ENCODE measurements at regions of chr6 and their contacts with region 1.

Region 1: DNA sequence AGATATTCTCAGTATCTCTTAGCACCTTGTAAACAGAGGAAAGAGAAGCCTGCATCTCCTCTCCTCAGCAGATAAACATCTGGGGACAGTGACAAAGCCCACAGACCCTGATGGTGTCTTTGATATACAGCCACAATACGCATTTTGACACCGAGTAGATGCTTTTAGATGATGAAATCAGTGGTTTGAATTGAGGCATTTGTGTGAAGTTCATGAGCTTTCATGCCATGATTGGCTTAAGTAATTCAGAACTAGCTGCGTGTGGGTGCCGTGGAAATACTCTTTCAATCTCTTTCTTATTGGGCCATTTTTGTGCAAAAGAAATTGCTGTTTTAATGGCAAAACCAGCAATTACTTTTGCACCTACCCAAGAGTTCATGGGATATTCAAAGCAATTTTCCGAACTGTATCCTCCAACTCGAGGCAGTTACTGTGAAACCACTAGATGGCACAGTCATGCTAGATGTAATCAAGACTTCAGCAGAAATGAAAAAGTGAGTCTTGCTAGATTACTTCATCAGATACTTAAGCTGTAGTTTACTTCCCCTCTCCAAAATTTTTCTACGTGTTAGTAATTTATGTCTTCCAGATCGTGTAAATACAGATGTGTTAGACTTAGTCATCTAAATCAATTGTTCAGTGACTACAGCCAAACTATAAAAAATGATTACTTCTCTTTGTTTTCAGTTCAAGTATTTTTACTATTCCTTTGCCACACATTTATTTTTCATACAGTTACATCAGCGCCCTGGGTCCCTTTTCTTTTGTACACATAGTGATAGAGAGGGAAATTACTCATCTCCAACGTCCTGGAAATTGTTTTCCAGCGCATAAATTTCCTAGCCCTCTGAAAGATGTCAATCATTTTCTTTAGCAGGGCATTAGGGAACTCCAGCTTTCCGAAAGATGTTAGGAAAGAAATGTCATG is 49.4 kb downstream of the IYD start:
- DNase-seq: peak; percentile 86
- ATAC-seq: peak; percentile 89
- H3K4me3 ChIP-seq: peak overlapping the region; percentile 59
- H3K27ac ChIP-seq: peak overlapping the region; percentile 78
- H3K4me1 ChIP-seq: peaks cover 11% of the 10 kb centered on the region
- H3K27me3 ChIP-seq: no peaks in the 10 kb centered on the region
- CTCF ChIP-seq: peak; percentile 80

Region 2: DNA sequence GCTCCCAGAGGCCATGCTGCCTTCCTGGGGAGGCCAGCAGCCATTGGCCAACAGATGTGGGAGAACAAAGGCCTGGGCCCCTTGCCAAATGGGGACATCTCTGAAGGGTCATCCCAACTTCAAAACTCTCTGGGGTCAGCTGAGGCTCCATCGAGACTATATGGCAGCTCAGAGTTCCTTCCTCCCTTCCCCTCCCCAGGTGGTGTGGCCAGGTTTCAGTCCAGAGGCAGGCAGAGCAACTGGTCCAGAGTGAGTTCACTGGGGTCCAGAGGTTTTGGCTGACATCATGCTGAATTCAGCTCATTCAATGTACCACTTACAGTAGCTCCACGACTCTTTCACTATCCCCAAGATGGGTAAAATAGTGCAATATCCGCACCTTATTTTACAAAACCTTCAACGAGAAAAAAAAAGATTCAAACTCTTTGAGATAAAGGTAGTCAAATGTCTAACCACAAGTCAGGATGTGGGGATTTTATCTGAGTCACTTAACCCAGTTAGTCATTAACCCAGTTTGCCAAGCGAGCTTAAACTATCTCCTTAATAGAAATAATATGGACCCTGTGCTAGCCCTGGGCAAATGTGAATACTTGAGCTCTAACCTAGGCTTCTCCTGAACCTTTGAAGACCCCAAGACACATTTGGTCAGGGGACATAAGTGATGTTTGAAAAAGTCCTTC is 73.1 kb after region 1 on chr6:
- CTCF ChIA-PET with region 1: no interaction called
- POLR2A ChIA-PET with region 1: no interaction called
- intact Hi-C with region 1: loop called (anchors 5 kb)
- DNase-seq: peak; percentile 87
- ATAC-seq: peak; percentile 66
- H3K4me3 ChIP-seq: peak overlapping the region; percentile 54
- H3K27ac ChIP-seq: peak overlapping the region; percentile 100
- H3K4me1 ChIP-seq: peaks cover 39% of the 10 kb centered on the region
- H3K27me3 ChIP-seq: no peaks in the 10 kb centered on the region
- CTCF ChIP-seq: no peak

Region 3: DNA sequence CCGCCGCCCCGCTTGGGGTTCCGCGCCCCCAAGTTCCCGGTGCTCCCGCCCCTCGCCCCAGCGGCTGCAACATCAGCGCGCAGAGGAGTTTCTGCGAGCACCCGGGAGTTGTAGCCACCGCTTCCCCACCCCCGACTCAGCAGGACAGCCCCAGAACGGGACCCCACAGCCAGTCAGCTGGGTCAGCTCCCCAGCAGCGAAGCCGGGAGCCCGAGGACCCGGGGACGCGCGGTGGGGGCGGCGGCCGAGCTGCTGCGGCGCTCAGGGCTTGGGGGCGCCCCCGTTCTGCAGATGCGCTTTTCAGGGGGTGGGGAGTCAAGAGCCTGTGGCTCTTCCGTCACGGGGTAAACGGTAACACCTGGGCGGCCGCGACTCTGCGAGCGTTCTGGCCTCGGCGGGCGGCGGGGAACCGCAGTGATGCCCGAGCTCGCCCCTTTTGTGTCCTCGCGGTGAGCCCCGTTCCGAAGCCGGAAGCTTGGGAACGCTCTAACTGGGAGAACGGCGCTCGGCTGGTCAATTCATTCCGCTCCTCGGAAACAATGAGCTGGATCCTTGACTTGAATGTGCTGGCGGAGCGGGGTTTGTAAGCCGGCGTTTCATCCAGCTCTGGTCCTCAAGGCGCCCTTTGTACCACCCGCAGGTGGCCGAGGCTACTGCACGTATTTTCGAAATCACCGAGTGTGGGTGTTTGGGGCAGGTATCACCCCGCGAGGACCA is 182.3 kb after region 1 on chr6:
- CTCF ChIA-PET with region 1: interaction called, 3 read pairs
- POLR2A ChIA-PET with region 1: no interaction called
- intact Hi-C with region 1: loop called (anchors 1 kb)
- DNase-seq: peak; percentile 75
- ATAC-seq: peak; percentile 83
- H3K4me3 ChIP-seq: peak overlapping the region; percentile 86
- H3K27ac ChIP-seq: no peak overlapping the region
- H3K4me1 ChIP-seq: peaks cover 6% of the 10 kb centered on the region
- H3K27me3 ChIP-seq: no peaks in the 10 kb centered on the region
- CTCF ChIP-seq: peak; percentile 55

Region 4: GRCh38 chr6:150881911-150882481 is 463.8 kb after region 1 on chr6:
- CTCF ChIA-PET with region 1: no interaction called
- POLR2A ChIA-PET with region 1: no interaction called
- intact Hi-C with region 1: loop called (anchors 1 kb)
- DNase-seq: peak; percentile 88
- ATAC-seq: peak; percentile 95
- H3K4me3 ChIP-seq: peak overlapping the region; percentile 23; the same call in 1 of the 2 replicates
- H3K27ac ChIP-seq: peak overlapping the region; percentile 98
- H3K4me1 ChIP-seq: peaks cover 27% of the 10 kb centered on the region
- H3K27me3 ChIP-seq: no peaks in the 10 kb centered on the region
- CTCF ChIP-seq: no peak

Region 5: GRCh38 chr6:151330134-151330696 is 912.1 kb after region 1 on chr6:
- CTCF ChIA-PET with region 1: no interaction called
- POLR2A ChIA-PET with region 1: no interaction called
- intact Hi-C with region 1: loop called (anchors 10 kb)
- DNase-seq: no peak
- ATAC-seq: no peak
- H3K4me3 ChIP-seq: no peak overlapping the region
- H3K27ac ChIP-seq: no peak overlapping the region
- H3K4me1 ChIP-seq: peaks cover 10% of the 10 kb centered on the region
- H3K27me3 ChIP-seq: no peaks in the 10 kb centered on the region
- CTCF ChIP-seq: no peak